Aorta (tissue), 5 donors: ENCODE measurements at regions of chr3 and their contacts with region 1.

Region 1: GRCh38 chr3:138923531-138923994 is 23.4 kb downstream of the FOXL2 start:
- DNase-seq: peak; percentile 88 to 90
- ATAC-seq: peak; percentile 82
- H3K4me3 ChIP-seq: no peak overlapping the region
- H3K27ac ChIP-seq: no peak overlapping the region
- H3K4me1 ChIP-seq: no peaks in the 10 kb centered on the region
- H3K27me3 ChIP-seq: no peaks in the 10 kb centered on the region

Region 2: DNA sequence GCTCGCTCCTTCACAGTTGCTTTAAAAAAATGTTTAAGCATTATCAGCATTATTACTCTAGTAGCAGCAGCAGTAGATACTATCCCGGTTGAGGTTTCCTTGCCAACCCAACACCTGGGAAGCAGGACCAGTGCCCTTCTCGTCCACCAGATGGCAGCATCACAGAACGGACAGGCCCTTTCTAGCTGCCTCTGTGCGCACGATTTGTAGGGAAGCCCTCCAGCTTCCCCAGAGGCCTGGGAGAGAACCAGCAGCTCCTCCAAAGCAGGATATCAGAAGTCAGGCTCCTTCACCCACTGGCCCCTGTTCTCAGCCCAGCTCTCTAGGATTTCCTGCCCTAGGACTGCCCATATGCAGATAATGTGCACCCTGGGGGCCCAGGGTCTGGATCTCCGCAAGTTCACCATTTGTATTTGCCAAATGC is 506.0 kb before region 1 on chr3:
- intact Hi-C with region 1: loop called (anchors 5 to 10 kb)
- DNase-seq: peak; percentile 79 to 88
- ATAC-seq: peak; percentile 84
- H3K4me3 ChIP-seq: no peak overlapping the region
- H3K27ac ChIP-seq: no peak overlapping the region
- H3K4me1 ChIP-seq: no peaks in the 10 kb centered on the region
- H3K27me3 ChIP-seq: no peaks in the 10 kb centered on the region